Common myeloid progenitor, CD34-positive (primary cell): ENCODE measurements at regions of chr3 and their contacts with region 1.

Region 1: DNA sequence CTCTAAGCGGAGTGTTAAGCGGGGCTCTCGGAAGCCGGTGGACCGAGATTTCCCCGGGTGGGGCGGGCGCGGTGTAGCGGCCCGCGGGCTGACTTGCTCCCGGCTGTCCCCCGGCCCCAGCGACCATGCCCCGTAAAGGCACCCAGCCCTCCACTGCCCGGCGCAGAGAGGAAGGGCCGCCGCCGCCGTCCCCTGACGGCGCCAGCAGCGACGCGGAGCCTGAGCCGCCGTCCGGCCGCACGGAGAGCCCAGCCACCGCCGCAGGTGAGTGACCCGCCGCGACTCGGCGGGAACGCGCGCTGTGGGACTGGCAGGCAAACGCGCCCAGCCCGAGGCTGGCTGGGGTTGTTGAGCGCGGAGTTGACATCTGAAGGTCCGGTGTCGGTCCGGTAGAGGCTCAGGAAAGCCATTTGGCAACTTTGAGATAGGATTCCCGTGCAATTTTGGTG is 1.3 kb downstream of the SMC4 start:
- DNase-seq: no peak
- H3K4me3 ChIP-seq: peak overlapping the region; percentile 88 to 99 (median 98)
- H3K27ac ChIP-seq: peak overlapping the region; percentile 86 to 95
- H3K4me1 ChIP-seq: peaks cover 26 to 52% (median 37%) of the 10 kb centered on the region in 4 experiments
- H3K27me3 ChIP-seq: no peaks in the 10 kb centered on the region

Region 2: GRCh38 chr3:160413613-160414248 is 13.0 kb after region 1 on chr3:
- CTCF ChIA-PET with region 1: interaction called, 22 read pairs
- POLR2A ChIA-PET with region 1: interaction called, 4 read pairs
- DNase-seq: peak; percentile 89 to 94 (median 90)
- H3K4me3 ChIP-seq: no peak overlapping the region
- H3K27ac ChIP-seq: no peak overlapping the region
- H3K4me1 ChIP-seq: peaks cover 8 to 23% (median 13%) of the 10 kb centered on the region in 4 experiments
- H3K27me3 ChIP-seq: no peaks in the 10 kb centered on the region

Region 3: GRCh38 chr3:160434071-160434470 is 33.3 kb after region 1 on chr3:
- CTCF ChIA-PET with region 1: no interaction called
- POLR2A ChIA-PET with region 1: no interaction called
- DNase-seq: no peak
- H3K4me3 ChIP-seq: no peak overlapping the region
- H3K27ac ChIP-seq: peak overlapping the region in 1 of 2 experiments; percentile 18
- H3K4me1 ChIP-seq: no peaks in the 10 kb centered on the region
- H3K27me3 ChIP-seq: no peaks in the 10 kb centered on the region